ENCODE measurements at regions of chr19 and their contacts with region 1.

Region 1: GRCh38 chr19:2869618-2870017 is 2.5 kb downstream of the ZNF556 start:
- DNase-seq: no peak
- H3K4me3 ChIP-seq: no peak overlapping the region
- CTCF ChIP-seq: no peak
- POLR2A ChIP-seq: no peak

Region 2: GRCh38 chr19:2653710-2654707 is 215.6 kb before region 1 on chr19:
- intact Hi-C with region 1: loop called (anchors 10 kb)
- DNase-seq: no peak
- H3K4me3 ChIP-seq: no peak overlapping the region
- CTCF ChIP-seq: no peak
- POLR2A ChIP-seq: no peak

Measured in lower leg skin (tissue), 4 donors.